ENCODE measurements at regions of chr6 and their contacts with region 1.

Region 1: GRCh38 chr6:44172731-44173500 is 14.3 kb downstream of the CAPN11 start:
- DNase-seq: peak; percentile 84 to 90 (median 85)
- ATAC-seq: peak; percentile 84 to 94 (median 94)
- H3K4me3 ChIP-seq: no peak overlapping the region
- H3K27ac ChIP-seq: no peak overlapping the region
- H3K4me1 ChIP-seq: peaks cover 0 to 25% (median 15%) of the 10 kb centered on the region in 12 donors
- H3K27me3 ChIP-seq: no peaks in the 10 kb centered on the region
- CTCF ChIP-seq: peak; percentile 83 to 96 (median 90)
- POLR2A ChIP-seq: no peak

Region 2: DNA sequence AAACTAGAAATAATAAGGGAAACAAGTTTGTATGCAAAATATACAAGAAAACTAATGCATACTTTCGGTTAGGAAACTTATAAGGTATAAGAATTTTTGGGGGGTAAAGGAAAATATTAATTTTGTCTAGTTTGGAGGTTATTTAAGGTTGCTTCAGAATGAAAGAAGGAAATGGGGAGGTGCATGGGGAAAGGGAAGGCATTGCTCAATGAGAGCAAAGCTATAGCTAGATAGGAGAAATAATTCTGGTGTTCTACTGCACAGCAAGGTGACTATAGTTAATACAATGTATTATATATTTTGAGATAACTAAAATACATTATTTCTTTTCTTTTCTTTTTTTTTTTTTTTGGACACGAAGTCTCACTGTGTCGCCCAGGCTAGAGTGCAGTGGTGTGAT is 38.4 kb after region 1 on chr6:
- intact Hi-C with region 1: loop called in 3 of 10 experiments (anchors 5 kb)
- DNase-seq: no peak
- ATAC-seq: no peak
- H3K4me3 ChIP-seq: no peak overlapping the region
- H3K27ac ChIP-seq: no peak overlapping the region
- H3K4me1 ChIP-seq: peaks cover 0 to 5% (median 3%) of the 10 kb centered on the region in 12 donors
- H3K27me3 ChIP-seq: no peaks in the 10 kb centered on the region
- CTCF ChIP-seq: no peak
- POLR2A ChIP-seq: no peak

Region 3: DNA sequence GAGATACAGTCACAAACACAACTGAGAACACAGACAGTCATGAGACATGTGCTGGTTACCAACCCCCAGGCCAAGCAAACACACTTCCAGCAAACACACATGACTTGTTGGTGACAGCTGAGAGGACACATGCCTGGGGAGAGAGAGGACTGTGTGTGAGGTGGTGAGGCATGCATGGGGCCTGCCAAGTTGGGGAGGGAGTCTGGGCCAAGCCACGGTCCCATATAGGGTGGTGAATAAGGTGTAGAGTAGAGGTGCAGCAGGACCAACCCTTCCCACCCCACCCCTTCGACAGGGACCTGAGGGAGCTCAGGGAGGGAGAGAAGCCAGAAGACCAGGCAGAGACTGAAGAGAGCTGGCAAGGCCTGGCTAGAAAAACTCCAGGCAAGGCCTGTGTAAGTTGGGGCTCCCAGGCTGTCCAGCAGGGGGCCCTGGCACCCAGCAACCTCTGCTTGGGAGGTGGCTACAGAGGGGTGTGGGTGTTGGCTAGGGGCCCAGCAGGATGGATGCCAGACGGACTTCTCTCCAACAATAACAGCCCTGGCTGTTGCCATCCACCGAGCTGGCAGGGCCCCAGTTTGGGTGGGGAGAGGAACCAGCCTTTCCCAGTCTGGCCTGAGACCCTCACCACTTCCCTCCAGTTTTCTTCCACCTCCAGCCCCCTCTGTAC is 48.5 kb after region 1 on chr6:
- intact Hi-C with region 1: loop called in 3 of 10 experiments (anchors 5 kb)
- DNase-seq: peak; percentile 93 to 95 (median 95)
- ATAC-seq: peak; percentile 63 to 78 (median 73)
- H3K4me3 ChIP-seq: peak overlapping the region in 9 of 12 donors; percentile 9 to 88 (median 71)
- H3K27ac ChIP-seq: peak overlapping the region; percentile 54 to 99 (median 92)
- H3K4me1 ChIP-seq: peaks cover 9 to 95% (median 85%) of the 10 kb centered on the region in 12 donors
- H3K27me3 ChIP-seq: no peaks in the 10 kb centered on the region
- CTCF ChIP-seq: peak; percentile 71 to 95 (median 82)
- POLR2A ChIP-seq: peak in 1 of 2 donors; percentile 15

Region 4: DNA sequence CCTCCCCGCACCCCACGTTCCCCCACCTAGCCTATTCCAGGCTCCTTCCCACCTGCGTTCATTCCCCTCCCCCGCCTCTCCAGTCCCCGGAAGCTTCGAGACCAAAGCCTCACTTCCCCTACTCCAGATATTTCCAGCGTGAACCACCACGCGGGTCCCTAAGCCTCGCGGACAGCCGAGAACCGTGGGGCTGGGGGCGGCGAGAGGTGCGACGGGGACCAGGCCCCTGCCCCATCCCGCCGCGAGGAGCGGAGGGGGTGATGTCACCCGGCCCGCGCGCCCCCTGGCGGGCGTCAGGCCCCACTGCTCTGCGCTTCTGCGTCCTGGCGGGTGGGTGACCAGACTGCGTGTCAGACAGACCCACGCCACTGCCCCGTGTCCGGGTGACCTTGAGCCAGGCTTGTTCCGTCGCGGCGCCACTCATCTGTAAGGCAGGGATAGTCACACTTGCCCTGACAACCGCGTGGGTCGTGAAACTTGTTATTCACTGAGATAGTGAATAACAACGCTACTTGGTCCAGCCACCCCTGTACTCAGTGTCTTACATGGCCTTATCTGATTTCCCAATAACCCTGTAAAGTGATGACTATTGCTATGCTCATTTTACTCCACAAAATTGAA is 65.0 kb after region 1 on chr6:
- intact Hi-C with region 1: loop called (anchors 1 to 5 kb)
- DNase-seq: peak; percentile 80 to 91 (median 83)
- ATAC-seq: peak; percentile 30 to 81 (median 74)
- H3K4me3 ChIP-seq: peak overlapping the region; percentile 32 to 75 (median 62)
- H3K27ac ChIP-seq: peak overlapping the region; percentile 87 to 99 (median 95)
- H3K4me1 ChIP-seq: peaks cover 3 to 52% (median 39%) of the 10 kb centered on the region in 12 donors
- H3K27me3 ChIP-seq: no peaks in the 10 kb centered on the region
- CTCF ChIP-seq: peak; percentile 95 to 100 (median 98)
- POLR2A ChIP-seq: peak in 1 of 2 donors; percentile 29

Region 5: DNA sequence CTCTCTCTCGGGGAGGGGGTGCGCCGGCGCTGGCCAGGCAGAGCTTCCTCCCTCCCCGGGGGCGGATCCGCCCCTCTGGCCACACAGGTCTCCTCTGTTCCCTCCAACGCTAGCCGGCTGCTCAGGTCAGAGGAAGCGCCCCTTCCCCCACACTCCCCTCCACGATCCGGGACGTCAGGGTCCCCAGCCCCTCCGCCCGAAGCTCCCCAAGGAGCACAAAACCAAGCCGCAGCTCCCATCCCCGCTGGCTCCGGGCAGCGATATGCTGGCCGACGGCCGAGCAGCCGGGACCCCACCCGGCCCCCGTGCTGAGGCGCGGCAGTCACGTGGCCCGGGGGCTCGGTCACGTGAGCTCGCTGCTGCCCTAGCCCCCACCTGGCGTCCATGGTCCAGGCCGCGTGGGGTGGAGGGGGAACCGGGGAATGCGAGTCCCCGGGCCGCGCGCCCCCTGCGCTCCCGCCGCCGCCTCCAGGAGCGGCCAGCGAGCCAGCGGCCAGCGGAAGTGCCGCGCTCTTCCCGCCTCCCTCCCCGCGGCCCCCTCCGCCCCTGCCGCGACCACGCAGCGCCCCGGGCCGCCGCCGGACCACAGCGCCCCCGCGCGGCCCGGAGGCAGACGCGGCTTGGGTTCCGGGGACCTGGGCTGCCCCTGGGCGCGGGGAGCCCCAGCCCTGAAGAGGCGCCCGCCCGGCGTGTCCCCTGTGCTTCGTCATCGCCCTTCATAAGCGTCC is 84.3 kb after region 1 on chr6 and contains the start of gene SLC35B2:
- intact Hi-C with region 1: loop called in 4 of 10 experiments (anchors 5 kb)
- DNase-seq: peak; percentile 71 to 83 (median 75)
- ATAC-seq: peak; percentile 59 to 77 (median 75)
- H3K4me3 ChIP-seq: peak within 1 kb of the TSS; percentile 60 to 99 (median 88)
- H3K27ac ChIP-seq: peak within 1 kb of the TSS; percentile 75 to 97 (median 94)
- H3K4me1 ChIP-seq: peaks cover 3 to 50% (median 23%) of the 10 kb centered on the region in 12 donors
- H3K27me3 ChIP-seq: no peaks in the 10 kb centered on the region
- CTCF ChIP-seq: peak; percentile 48 to 94 (median 78)
- POLR2A ChIP-seq: peak in 1 of 2 donors; percentile 80
- total RNA-seq, gene SLC35B2: 18.1 to 35.6 (median 26.4) TPM

Region 6: DNA sequence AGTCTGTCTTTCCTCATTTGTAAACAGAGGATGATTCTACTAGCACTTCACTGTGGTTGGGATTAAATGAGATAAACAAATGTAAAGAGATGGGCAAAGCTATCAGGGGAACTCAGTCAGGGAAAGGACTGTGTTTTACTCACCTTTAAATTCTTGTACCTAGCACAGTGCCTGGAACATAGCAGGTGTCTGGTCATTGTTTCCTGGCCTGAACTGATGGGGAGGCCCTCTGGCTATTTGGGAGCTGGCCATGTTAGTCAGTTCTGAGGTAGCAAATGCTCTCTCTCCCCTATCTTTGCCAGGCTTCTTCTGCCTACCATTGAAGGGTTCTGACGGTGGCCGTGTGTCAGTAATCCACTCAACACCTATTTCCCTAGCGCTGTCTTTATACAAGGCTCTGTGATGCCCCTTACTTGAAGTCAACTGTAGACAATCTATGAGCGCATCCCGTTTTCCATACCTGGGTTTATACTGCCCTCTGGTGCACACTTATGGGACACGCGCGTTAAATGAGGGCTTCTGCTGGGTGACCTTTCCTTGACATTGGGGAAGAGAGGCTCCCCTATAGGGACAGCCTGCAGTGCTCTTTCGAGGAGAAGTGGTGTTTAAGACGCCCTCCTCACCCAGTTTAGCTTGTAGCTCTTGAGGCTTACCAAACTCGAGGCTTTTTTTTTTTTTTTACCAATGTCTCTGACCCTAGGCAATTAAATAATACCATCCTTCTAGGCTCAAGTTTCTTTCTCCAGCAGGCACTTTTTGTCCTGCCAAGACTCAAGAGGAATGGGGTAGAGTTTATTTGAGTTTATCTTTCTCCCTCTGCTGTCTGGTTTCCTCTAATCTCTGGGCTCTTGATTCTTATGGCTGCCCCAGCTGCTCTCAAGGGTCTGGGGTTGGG is 165.6 kb after region 1 on chr6:
- intact Hi-C with region 1: loop called in 9 of 10 experiments (anchors 2 to 10 kb)
- DNase-seq: peak in 4 of 5 donors; percentile 44 to 58 (median 46)
- ATAC-seq: peak; percentile 57 to 83 (median 78)
- H3K4me3 ChIP-seq: no peak overlapping the region
- H3K27ac ChIP-seq: peak overlapping the region in 1 of 12 donors; percentile 42
- H3K4me1 ChIP-seq: peaks cover 0 to 12% (median 5%) of the 10 kb centered on the region in 12 donors
- H3K27me3 ChIP-seq: peaks cover 0 to 7% (median 0%) of the 10 kb centered on the region in 9 donors
- CTCF ChIP-seq: peak; percentile 51 to 79 (median 61)
- POLR2A ChIP-seq: no peak

Region 7: DNA sequence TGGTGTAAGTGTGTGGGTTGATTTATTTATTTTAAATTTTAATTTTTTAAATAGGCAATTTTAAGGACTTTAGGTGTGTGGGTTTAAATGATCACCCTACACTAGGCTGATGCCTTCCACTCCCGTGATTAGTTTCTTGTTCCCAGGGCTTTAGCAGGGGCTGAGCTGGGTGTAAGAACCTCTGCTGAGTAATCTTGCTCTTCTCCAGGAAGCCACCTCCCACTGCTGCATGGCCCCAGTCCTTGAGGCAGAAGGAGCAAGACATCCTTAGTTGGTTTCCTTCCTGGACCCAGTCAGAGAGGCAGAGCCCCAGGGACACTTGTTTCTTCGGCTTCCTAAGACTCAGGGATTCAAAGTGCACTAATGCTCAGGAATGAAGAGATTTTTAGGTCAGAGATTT is 194.8 kb after region 1 on chr6:
- intact Hi-C with region 1: no loop called
- DNase-seq: no peak
- ATAC-seq: no peak
- H3K4me3 ChIP-seq: no peak overlapping the region
- H3K27ac ChIP-seq: no peak overlapping the region
- H3K4me1 ChIP-seq: no peaks in the 10 kb centered on the region
- H3K27me3 ChIP-seq: peaks cover 0 to 13% (median 0%) of the 10 kb centered on the region in 9 donors
- CTCF ChIP-seq: no peak
- POLR2A ChIP-seq: no peak

Measured in heart left ventricle (tissue), 16 donors.